ENCODE measurements at regions of chr19 and their contacts with region 1.

Region 1: DNA sequence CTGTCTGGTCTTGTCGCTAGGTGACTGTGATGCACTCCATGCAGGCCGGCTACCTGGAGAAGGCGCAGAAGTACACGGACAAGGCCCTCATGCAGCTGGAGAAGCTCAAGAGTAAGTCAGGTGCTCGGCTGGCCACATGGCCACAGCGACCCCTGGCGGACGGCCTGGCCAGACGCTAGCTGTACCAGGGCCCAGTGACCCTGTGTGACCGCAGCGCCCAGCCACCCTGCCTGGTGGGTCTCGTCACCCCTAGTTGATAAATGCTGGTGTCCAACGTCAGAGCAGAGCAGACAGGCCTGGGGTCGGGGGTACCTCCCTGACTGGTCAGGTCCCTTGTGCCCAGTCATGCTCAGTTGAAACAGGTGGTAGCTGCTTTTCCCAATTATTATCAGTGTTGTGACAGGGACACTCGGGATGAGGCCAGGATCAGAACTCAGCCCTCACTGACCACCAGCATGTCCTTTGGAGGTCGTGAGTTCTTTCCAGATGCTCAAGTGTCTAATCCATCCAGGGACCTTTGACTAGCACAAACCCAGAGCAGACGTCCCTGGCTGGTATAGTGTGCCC is 22.2 kb downstream of the MAU2 start:
- DNase-seq: peak in 1 of 35 experiments; percentile 11
- ATAC-seq: peak in 1 of 4 experiments; percentile 21
- H3K4me3 ChIP-seq: no peak overlapping the region
- H3K4me3 Mint-ChIP-seq: no peak overlapping the region
- H3K27ac ChIP-seq: no peak overlapping the region
- H3K27ac Mint-ChIP-seq: no peak overlapping the region
- H3K4me1 ChIP-seq: no peaks in the 10 kb centered on the region
- H3K4me1 Mint-ChIP-seq: no peaks in the 10 kb centered on the region
- H3K27me3 ChIP-seq: no peaks in the 10 kb centered on the region
- H3K27me3 Mint-ChIP-seq: no peaks in the 10 kb centered on the region

Region 2: DNA sequence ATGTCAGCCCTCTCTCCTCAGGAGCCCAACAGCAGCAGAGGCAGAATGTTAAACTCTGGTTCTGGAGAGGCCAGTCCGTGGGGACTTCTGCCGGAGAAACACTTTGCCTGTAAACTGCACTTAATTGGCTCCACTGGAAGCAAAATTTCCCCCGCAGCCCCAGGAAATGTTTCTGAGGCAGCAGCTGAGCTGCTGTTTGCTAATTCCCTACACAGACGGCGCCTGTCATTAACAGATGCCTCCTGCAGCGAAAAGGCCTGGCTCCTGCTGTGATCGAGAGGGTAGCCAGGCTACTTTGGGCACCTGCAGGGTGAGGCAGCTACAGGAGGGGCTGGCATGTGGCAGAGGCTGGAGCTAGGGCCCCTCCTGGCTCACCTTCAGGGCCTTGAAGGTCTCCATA is 64.5 kb before region 1 on chr19:
- CTCF ChIA-PET with region 1: no interaction called
- POLR2A ChIA-PET with region 1: interaction called in 1 of 2 experiments, 15 read pairs
- DNase-seq: no peak
- ATAC-seq: no peak
- H3K4me3 ChIP-seq: no peak overlapping the region
- H3K4me3 Mint-ChIP-seq: no peak overlapping the region
- H3K27ac ChIP-seq: no peak overlapping the region
- H3K27ac Mint-ChIP-seq: no peak overlapping the region
- H3K4me1 ChIP-seq: peaks cover 0 to 2% of the 10 kb centered on the region in 2 experiments
- H3K4me1 Mint-ChIP-seq: peaks cover 6 to 9% (median 6%) of the 10 kb centered on the region in 3 donors
- H3K27me3 ChIP-seq: peaks cover 0 to 40% of the 10 kb centered on the region in 2 experiments
- H3K27me3 Mint-ChIP-seq: peaks cover 9 to 12% of the 10 kb centered on the region in 2 donors

Region 3: GRCh38 chr19:19361075-19361594 is 18.3 kb after region 1 on chr19:
- CTCF ChIA-PET with region 1: no interaction called
- POLR2A ChIA-PET with region 1: no interaction called
- DNase-seq: peak in 34 of 35 experiments; percentile 14 to 86 (median 52)
- ATAC-seq: peak; percentile 51 to 63 (median 58)
- H3K4me3 ChIP-seq: no peak overlapping the region
- H3K4me3 Mint-ChIP-seq: peak overlapping the region; percentile 44 to 47 (median 46)
- H3K27ac ChIP-seq: peak overlapping the region; percentile 6
- H3K27ac Mint-ChIP-seq: peak overlapping the region; percentile 28 to 72
- H3K4me1 ChIP-seq: peaks cover 6 to 40% of the 10 kb centered on the region in 2 experiments
- H3K4me1 Mint-ChIP-seq: peaks cover 35 to 40% (median 40%) of the 10 kb centered on the region in 3 donors
- H3K27me3 ChIP-seq: no peaks in the 10 kb centered on the region
- H3K27me3 Mint-ChIP-seq: no peaks in the 10 kb centered on the region

Region 4: DNA sequence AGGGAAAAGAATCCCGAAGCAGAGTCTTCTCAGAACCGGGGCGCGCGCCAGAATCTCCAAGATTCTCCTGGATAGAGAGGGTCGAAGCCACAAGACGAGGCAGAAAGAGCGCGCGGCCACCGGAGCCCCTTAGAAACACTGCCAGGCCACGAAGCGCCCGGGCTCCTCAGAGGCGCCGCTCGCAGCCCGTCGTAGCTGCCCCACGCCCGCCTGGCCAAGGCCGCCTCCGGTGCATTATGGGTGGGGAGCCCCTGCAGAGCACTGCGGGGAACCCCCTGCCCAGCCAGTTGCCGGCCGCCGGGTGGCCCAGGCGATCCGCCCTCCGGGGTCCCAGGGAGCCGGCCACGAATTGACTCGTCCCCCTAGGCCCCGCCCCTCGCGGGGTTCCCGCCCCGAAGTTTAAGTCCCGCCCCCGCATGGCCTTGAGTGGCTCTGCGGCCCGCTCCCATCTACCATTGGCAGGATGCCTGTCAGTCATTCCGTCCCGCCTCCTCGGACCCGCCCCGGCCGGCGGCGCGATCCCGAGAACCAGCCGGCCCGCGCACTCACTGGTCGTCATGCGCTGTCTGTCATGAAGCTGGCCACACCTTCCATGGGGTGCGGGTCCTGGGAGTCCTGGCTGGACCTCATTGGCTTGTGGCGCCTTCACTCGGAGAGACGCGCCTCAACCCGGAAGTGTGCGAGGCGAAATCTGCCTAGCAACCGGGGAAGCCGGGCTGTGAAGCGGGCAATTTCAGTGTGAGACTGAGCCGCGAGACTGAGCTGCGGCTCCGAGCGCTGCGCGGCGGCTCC is 42.5 kb after region 1 on chr19:
- CTCF ChIA-PET with region 1: no interaction called
- POLR2A ChIA-PET with region 1: no interaction called
- DNase-seq: peak; percentile 95 to 99 (median 98)
- ATAC-seq: peak; percentile 90 to 93 (median 90)
- H3K4me3 ChIP-seq: peak overlapping the region; percentile 92 to 95
- H3K4me3 Mint-ChIP-seq: peak overlapping the region; percentile 87 to 100 (median 93)
- H3K27ac ChIP-seq: peak overlapping the region; percentile 80
- H3K27ac Mint-ChIP-seq: peak overlapping the region; percentile 84 to 92
- H3K4me1 ChIP-seq: peaks cover 32 to 53% of the 10 kb centered on the region in 2 experiments
- H3K4me1 Mint-ChIP-seq: peaks cover 39 to 42% (median 40%) of the 10 kb centered on the region in 3 donors
- H3K27me3 ChIP-seq: no peaks in the 10 kb centered on the region
- H3K27me3 Mint-ChIP-seq: no peaks in the 10 kb centered on the region

Region 5: GRCh38 chr19:19578252-19578651 is 235.4 kb after region 1 on chr19:
- CTCF ChIA-PET with region 1: no interaction called
- POLR2A ChIA-PET with region 1: no interaction called
- DNase-seq: no peak
- ATAC-seq: no peak
- H3K4me3 ChIP-seq: no peak overlapping the region
- H3K4me3 Mint-ChIP-seq: no peak overlapping the region
- H3K27ac ChIP-seq: no peak overlapping the region
- H3K27ac Mint-ChIP-seq: no peak overlapping the region
- H3K4me1 ChIP-seq: peaks cover 0 to 12% of the 10 kb centered on the region in 2 experiments
- H3K4me1 Mint-ChIP-seq: peaks cover 20 to 23% (median 21%) of the 10 kb centered on the region in 3 donors
- H3K27me3 ChIP-seq: no peaks in the 10 kb centered on the region
- H3K27me3 Mint-ChIP-seq: no peaks in the 10 kb centered on the region